PC-9 (cell line): ENCODE measurements at regions of chr3 and their contacts with region 1.

Region 1: GRCh38 chr3:62567097-62568021 is 194.0 kb upstream of the FEZF2 start:
- DNase-seq: peak in 1 of 2 experiments; percentile 19
- H3K4me3 ChIP-seq: no peak overlapping the region
- H3K27ac ChIP-seq: no peak overlapping the region
- H3K4me1 ChIP-seq: no peaks in the 10 kb centered on the region
- H3K27me3 ChIP-seq: no peaks in the 10 kb centered on the region
- CTCF ChIP-seq: no peak

Region 2: GRCh38 chr3:62521464-62522400 is 45.6 kb before region 1 on chr3:
- CTCF ChIA-PET with region 1: no interaction called
- POLR2A ChIA-PET with region 1: no interaction called
- intact Hi-C with region 1: no loop called
- DNase-seq: no peak
- H3K4me3 ChIP-seq: no peak overlapping the region
- H3K27ac ChIP-seq: no peak overlapping the region
- H3K4me1 ChIP-seq: no peaks in the 10 kb centered on the region
- H3K27me3 ChIP-seq: peaks cover 90% of the 10 kb centered on the region
- CTCF ChIP-seq: no peak

Region 3: GRCh38 chr3:62604300-62604699 is 36.9 kb after region 1 on chr3:
- CTCF ChIA-PET with region 1: no interaction called
- POLR2A ChIA-PET with region 1: no interaction called
- intact Hi-C with region 1: loop called (anchors 2 kb)
- DNase-seq: peak; percentile 45 to 63
- H3K4me3 ChIP-seq: peak overlapping the region; percentile 35; the same call in 1 of the 2 replicates
- H3K27ac ChIP-seq: peak overlapping the region; percentile 91
- H3K4me1 ChIP-seq: peaks cover 30% of the 10 kb centered on the region
- H3K27me3 ChIP-seq: no peaks in the 10 kb centered on the region
- CTCF ChIP-seq: no peak